Activated CD4-positive, alpha-beta memory T cell treated with anti-CD3 and anti-CD28 coated beads, Interleukin-2, amount 10 ng/mL, durations not matched to agents 7 days and 5 days (primary cell): ENCODE measurements at regions of chr22 and their contacts with region 1.

Region 1: GRCh38 chr22:31290494-31291471 is 1.5 kb downstream of the PIK3IP1 start:
- DNase-seq: peak; percentile 96
- H3K4me3 Mint-ChIP-seq: peak overlapping the region; percentile 98
- H3K27ac Mint-ChIP-seq: peak overlapping the region; percentile 99
- H3K4me1 Mint-ChIP-seq: peaks cover 69% of the 10 kb centered on the region
- H3K27me3 Mint-ChIP-seq: no peaks in the 10 kb centered on the region

Region 2: DNA sequence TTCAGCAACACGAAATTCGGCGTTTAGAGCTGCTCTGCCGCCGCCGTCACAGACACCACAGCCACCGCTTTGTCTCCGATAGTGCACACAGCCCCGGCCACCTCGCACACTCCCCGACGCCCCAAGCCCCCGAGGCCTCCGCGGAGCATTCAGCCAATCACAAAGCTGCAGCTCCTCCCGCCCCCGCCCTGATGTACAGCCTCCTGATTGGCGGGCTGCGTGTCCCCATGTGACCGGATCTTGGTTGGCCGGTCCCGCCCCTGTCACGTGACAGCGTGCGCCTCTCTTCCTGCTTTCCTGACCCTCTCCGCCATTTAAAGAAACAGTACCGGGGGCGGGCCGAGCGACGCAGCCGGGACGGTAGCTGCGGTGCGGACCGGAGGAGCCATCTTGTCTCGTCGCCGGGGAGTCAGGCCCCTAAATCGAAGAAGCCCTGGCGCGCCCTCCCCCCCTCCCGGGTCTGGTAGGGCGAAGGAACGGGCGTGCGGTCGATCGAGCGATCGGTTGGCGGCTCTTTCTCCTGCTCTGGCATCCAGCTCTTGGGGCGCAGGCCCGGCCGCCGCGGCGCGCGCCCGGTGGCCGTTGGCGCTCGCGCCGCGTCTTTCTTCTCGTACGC is 321.8 kb before region 1 on chr22 and contains the start of gene TUG1:
- CTCF ChIA-PET with region 1: no interaction called
- POLR2A ChIA-PET with region 1: interaction called, 30 read pairs
- DNase-seq: peak; percentile 98
- H3K4me3 Mint-ChIP-seq: peak within 1 kb of the TSS; percentile 95
- H3K27ac Mint-ChIP-seq: peak within 1 kb of the TSS; percentile 94
- H3K4me1 Mint-ChIP-seq: peaks cover 65% of the 10 kb centered on the region
- H3K27me3 Mint-ChIP-seq: no peaks in the 10 kb centered on the region
- total RNA-seq, gene TUG1: 71.2 to 72.5 TPM

Region 3: DNA sequence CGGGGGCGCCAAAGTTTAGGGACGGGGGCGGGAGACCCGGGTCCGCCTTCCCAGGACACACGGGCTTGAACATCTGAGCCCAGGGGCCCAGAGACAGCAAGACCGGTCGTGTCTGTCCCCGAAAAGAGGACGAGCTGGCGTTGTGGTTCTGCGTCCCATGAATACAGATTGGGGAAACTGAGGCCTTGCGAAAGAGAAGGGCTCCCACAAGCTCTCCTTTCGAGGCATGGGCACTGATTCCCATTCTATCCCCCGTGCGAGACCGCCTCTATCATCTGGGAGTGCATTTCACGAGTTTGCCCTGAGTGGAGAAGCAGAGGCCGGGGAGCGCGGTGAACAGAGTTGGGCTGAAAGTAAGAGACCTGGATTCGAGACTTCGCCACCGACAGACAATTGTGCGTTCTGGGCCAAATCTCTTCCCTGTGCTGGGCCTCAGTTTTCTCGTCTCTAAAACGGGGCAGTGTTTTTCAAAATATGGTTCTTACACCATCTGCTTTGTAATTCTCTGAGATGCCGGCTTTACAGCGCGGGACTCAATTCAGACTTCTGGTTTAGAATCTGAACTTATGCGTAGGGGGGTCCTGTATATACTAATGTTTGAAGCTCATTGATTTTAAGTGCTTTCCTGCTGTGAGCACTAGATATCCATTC is 130.3 kb before region 1 on chr22:
- CTCF ChIA-PET with region 1: interaction called, 4 read pairs
- POLR2A ChIA-PET with region 1: interaction called, 11 read pairs
- DNase-seq: peak; percentile 26
- H3K4me3 Mint-ChIP-seq: peak overlapping the region; percentile 100
- H3K27ac Mint-ChIP-seq: peak overlapping the region; percentile 96
- H3K4me1 Mint-ChIP-seq: peaks cover 34% of the 10 kb centered on the region
- H3K27me3 Mint-ChIP-seq: peaks cover 2% of the 10 kb centered on the region

Region 4: DNA sequence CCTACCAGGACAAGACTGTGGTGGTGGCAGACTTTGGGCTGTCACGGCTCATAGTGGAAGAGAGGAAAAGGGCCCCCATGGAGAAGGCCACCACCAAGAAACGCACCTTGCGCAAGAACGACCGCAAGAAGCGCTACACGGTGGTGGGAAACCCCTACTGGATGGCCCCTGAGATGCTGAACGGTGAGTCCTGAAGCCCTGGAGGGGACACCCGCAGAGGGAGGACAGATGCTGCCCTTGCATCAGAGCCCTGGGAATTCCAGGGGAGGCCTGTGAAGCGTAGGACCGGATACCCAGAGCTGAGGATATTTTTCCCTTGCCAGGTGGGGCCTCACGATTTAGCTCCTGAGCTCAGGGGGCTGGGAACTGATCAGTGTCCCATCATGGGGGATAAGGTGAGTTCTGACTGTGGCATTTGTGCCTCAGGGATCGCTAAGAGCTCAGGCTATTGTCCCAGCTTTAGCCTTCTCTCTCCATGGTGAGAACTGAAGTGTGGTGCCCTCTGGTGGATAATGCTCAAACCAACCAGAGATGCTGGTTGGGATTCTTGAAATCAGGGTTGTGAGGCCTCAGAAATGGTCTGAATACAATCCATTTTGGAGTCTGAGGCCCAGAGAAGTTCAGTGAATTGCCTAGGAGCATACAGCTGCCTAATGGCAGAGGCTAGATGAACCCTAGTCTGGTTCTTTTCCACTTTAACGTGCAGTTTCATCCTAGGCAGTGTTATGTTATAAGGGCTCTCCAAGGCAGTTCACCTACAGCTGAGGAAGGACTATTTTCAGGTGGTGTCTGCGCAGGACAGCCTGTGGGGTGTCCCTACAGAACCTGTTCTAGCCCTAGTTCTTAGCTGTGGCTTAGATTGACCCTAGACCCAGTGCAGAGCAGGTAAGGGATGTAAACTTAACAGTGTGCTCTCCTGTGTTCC is 18.0 kb before region 1 on chr22:
- CTCF ChIA-PET with region 1: interaction called, 59 read pairs
- POLR2A ChIA-PET with region 1: interaction called, 138 read pairs
- DNase-seq: peak; percentile 51
- H3K4me3 Mint-ChIP-seq: no peak overlapping the region
- H3K27ac Mint-ChIP-seq: no peak overlapping the region
- H3K4me1 Mint-ChIP-seq: peaks cover 5% of the 10 kb centered on the region
- H3K27me3 Mint-ChIP-seq: no peaks in the 10 kb centered on the region

Region 5: DNA sequence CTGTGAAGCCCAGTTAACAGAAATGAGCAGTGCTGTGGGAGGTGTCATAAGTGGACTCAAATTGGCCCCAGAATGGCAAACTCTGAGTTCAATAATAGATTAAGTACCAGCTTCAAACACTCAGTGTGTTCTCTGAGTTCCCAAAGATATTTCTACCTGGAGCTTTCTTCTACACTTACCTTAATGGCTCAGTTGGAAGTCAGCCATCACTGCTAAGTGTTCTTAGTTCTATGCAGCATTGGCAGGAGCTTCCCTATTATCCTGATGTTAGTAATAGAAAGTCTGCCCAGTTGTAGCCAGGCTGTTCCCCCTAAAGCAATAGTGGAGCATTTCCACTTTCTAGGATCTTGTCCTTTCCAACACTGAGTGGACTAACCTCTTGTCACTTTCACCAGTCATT is 11.2 kb after region 1 on chr22:
- CTCF ChIA-PET with region 1: interaction called, 10 read pairs
- POLR2A ChIA-PET with region 1: interaction called, 60 read pairs
- DNase-seq: no peak
- H3K4me3 Mint-ChIP-seq: no peak overlapping the region
- H3K27ac Mint-ChIP-seq: no peak overlapping the region
- H3K4me1 Mint-ChIP-seq: peaks cover 12% of the 10 kb centered on the region
- H3K27me3 Mint-ChIP-seq: no peaks in the 10 kb centered on the region

Region 6: GRCh38 chr22:31313366-31314147 is 22.8 kb after region 1 on chr22:
- CTCF ChIA-PET with region 1: interaction called, 26 read pairs
- POLR2A ChIA-PET with region 1: interaction called, 49 read pairs
- DNase-seq: peak; percentile 69
- H3K4me3 Mint-ChIP-seq: no peak overlapping the region
- H3K27ac Mint-ChIP-seq: no peak overlapping the region
- H3K4me1 Mint-ChIP-seq: peaks cover 11% of the 10 kb centered on the region
- H3K27me3 Mint-ChIP-seq: no peaks in the 10 kb centered on the region

Region 7: DNA sequence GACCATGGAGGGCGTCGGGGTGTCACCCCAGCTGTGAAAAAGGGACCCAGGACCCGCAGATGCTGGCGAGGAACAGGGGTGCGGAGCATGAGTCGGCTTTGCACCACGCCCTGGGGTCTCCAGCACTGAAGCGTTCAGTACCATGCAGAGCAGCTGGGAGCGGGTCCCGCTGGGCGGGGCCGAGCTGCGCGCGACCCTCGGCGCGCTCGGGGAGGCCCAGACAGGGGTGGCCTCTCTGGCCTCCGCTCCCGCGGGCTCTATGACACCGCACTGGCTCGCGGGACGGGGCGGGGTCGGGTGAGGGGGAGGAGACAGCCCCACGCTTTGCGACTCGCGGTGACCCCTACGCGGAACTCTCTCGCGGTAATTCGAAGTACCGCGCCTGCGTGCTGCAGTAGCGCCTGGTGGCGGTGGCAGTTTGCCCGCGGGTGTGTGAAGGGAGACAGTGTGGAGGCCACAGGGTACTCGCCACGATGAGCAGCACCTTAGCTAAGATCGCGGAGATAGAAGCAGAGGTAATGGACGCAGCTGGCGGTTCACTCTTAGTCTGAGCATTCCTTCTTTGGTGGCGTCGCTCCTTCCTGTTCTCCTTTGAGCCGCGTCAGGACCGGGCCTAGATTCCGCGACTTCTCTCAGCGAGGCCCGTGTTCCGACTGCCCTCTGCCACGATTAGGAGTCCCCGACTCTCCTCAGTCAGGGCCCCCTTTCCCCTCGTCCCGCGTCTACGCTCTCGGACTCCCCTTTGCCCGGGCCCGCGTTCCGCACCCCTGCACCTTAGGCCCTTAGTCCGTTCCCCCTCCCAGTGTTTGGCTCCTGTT is 108.6 kb after region 1 on chr22 and contains the start of gene DRG1:
- CTCF ChIA-PET with region 1: interaction called, 3 read pairs
- POLR2A ChIA-PET with region 1: interaction called, 29 read pairs
- DNase-seq: peak; percentile 97
- H3K4me3 Mint-ChIP-seq: peak within 1 kb of the TSS; percentile 92
- H3K27ac Mint-ChIP-seq: peak within 1 kb of the TSS; percentile 79
- H3K4me1 Mint-ChIP-seq: peaks cover 22% of the 10 kb centered on the region
- H3K27me3 Mint-ChIP-seq: peaks cover under 1% of the 10 kb centered on the region
- total RNA-seq, gene DRG1: 73.4 to 86.4 TPM